Caco-2 (cell line): ENCODE measurements at regions of chr1 and their contacts with region 1.

Region 1: GRCh38 chr1:161440312-161440894 is 64.9 kb upstream of the FCGR2A start:
- DNase-seq: peak; percentile 68 to 78
- H3K4me3 ChIP-seq: peak overlapping the region; percentile 73
- H3K4me3 Mint-ChIP-seq: peak overlapping the region; percentile 89
- H3K27ac Mint-ChIP-seq: peak overlapping the region; percentile 89
- H3K4me1 ChIP-seq: no peaks in the 10 kb centered on the region
- H3K4me1 Mint-ChIP-seq: no peaks in the 10 kb centered on the region
- H3K27me3 ChIP-seq: no peaks in the 10 kb centered on the region
- H3K27me3 Mint-ChIP-seq: peaks cover 3% of the 10 kb centered on the region
- CTCF ChIP-seq: peak; percentile 31 to 54

Region 2: GRCh38 chr1:161399257-161399998 is 41.0 kb before region 1 on chr1:
- CTCF ChIA-PET with region 1: no interaction called
- POLR2A ChIA-PET with region 1: no interaction called
- intact Hi-C with region 1: loop called (anchors 10 kb)
- DNase-seq: peak; percentile 89 to 91
- H3K4me3 ChIP-seq: peak overlapping the region; percentile 63
- H3K4me3 Mint-ChIP-seq: peak overlapping the region; percentile 77
- H3K27ac Mint-ChIP-seq: peak overlapping the region; percentile 87
- H3K4me1 ChIP-seq: peaks cover 11% of the 10 kb centered on the region
- H3K4me1 Mint-ChIP-seq: peaks cover 23% of the 10 kb centered on the region
- H3K27me3 ChIP-seq: no peaks in the 10 kb centered on the region
- H3K27me3 Mint-ChIP-seq: no peaks in the 10 kb centered on the region
- CTCF ChIP-seq: peak; percentile 28 to 55